Dorsolateral prefrontal cortex (tissue), 120 donors: ENCODE measurements at regions of chr19 and their contacts with region 1.

Region 1: GRCh38 chr19:7919610-7920518 is at the start of gene SNAPC2:
- DNase-seq: peak; percentile 86 to 95 (median 90)
- H3K4me3 ChIP-seq: peak within 1 kb of the TSS; percentile 59 to 90 (median 77)
- H3K27ac ChIP-seq: peak within 1 kb of the TSS; percentile 66 to 98 (median 92)
- H3K27me3 ChIP-seq: peaks cover 0 to 41% (median 21%) of the 10 kb centered on the region in 45 donors
- CTCF ChIP-seq: peak in 32 of 56 donors; percentile 11 to 45 (median 26)
- total RNA-seq, gene SNAPC2: 11.3 to 27.9 (median 16.9) TPM

Region 2: DNA sequence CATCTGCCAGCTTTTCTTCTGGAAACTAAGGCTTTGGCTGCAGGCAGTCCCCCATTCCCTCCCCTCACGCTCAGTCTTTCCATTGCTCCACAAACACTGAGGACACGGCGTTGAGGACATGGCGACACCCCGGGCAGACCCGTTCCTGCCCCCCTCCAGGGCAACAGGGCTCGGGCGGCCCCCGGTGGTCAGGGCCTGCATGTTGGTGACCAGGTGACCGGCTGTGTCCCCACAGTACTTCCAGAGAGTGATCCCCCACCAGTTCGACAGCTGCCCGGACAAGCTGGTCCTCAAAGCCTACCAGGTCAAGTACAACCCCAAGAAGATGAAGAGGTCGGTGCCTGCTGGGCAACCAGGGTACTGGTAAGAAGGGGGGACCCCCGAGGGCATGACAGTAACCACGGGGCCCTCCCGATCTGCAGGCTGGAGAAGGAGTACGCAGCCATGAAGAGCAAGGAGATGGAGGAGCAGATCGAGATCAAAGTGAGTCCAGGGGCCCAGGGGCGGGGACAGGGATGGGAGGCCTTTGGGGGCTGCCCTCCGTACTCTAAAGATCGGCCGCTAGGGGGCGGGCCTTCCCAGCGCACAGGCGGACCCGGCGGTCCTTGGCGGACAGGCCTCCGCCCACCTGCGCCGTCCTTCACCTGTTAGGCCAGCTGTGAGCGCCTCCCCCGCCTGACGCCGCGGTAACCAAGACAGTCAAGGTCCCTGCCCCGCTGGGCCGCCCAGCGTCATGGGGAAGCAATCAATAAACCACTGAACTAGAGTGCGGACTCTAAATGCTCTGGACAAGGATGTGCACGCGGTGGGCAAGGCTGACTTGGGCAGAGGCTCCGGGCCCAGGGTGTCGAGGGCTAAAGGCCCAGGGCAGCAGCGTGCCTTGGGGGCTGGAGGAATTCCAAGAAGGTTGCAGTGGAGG is 66.8 kb before region 1 on chr19:
- intact Hi-C with region 1: loop called in 1 of 2 experiments (anchors 5 kb)
- DNase-seq: peak in 8 of 10 donors; percentile 61 to 83 (median 76)
- H3K4me3 ChIP-seq: peak overlapping the region in 34 of 59 donors; percentile 1 to 55 (median 22)
- H3K27ac ChIP-seq: peak overlapping the region in 58 of 59 donors; percentile 35 to 100 (median 97)
- H3K27me3 ChIP-seq: no peaks in the 10 kb centered on the region
- CTCF ChIP-seq: peak; percentile 49 to 94 (median 82)

Region 3: GRCh38 chr19:7861955-7862951 is 57.6 kb before region 1 on chr19:
- intact Hi-C with region 1: loop called (anchors 5 kb)
- DNase-seq: peak in 1 of 10 donors; percentile 84
- H3K4me3 ChIP-seq: peak overlapping the region in 16 of 59 donors; percentile 6 to 44 (median 24)
- H3K27ac ChIP-seq: peak overlapping the region in 55 of 59 donors; percentile 3 to 89 (median 64)
- H3K27me3 ChIP-seq: peaks cover 0 to 3% (median 0%) of the 10 kb centered on the region in 45 donors
- CTCF ChIP-seq: peak in 5 of 56 donors; percentile 7 to 23 (median 11)

Region 4: GRCh38 chr19:7868676-7869452 is 51.0 kb before region 1 on chr19:
- intact Hi-C with region 1: loop called (anchors 5 kb)
- DNase-seq: peak in 3 of 10 donors; percentile 51 to 79 (median 66)
- H3K4me3 ChIP-seq: peak overlapping the region; percentile 18 to 66 (median 49)
- H3K27ac ChIP-seq: peak overlapping the region in 43 of 59 donors; percentile 9 to 79 (median 46)
- H3K27me3 ChIP-seq: peaks cover 0 to 5% (median 0%) of the 10 kb centered on the region in 45 donors
- CTCF ChIP-seq: peak; percentile 28 to 90 (median 72)

Region 5: DNA sequence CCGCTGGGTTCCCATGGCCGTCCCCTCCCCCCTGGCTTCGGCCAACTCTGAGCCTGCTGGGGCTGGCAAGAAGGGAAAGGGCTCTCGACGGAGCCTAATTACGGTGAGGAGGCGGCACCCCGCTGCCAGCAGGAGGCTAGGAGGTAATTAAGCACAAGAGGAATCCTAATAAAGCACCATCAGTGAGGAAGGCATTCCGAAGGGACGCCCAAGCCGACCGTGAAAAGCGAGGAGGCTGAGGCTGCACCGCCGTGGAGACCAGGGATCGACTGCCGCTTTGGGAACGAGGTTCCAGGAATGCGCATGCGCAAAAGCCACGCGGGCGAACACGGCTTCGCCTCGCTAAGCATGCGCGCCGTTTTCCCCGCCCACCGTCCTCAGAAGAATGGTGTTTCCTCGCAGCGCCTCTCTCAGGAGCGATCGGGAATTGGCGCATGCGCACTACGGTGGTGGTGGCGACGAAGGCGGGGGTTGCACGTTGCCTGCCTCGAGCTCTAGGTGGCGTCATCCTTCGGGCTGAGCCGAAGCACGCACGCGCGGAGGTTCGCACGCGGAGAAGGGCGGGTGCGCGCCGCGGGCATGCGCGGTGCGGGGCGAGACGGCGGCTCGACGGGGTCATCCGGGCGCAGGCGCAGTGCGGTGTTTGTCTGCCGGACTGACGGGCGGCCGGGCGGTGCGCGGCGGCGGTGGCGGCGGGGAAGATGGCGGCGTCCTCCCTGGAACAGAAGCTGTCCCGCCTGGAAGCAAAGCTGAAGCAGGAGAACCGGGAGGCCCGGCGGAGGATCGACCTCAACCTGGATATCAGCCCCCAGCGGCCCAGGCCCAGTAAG is 16.4 kb before region 1 on chr19 and contains the start of gene MAP2K7:
- intact Hi-C with region 1: loop called (anchors 1 kb)
- DNase-seq: peak; percentile 98 to 100 (median 99)
- H3K4me3 ChIP-seq: peak within 1 kb of the TSS; percentile 61 to 99 (median 88)
- H3K27ac ChIP-seq: peak within 1 kb of the TSS in 58 of 59 donors; percentile 54 to 97 (median 90)
- H3K27me3 ChIP-seq: no peaks in the 10 kb centered on the region
- CTCF ChIP-seq: peak; percentile 78 to 99 (median 94)
- total RNA-seq, gene MAP2K7: 28.0 to 51.9 (median 39.4) TPM

Region 6: DNA sequence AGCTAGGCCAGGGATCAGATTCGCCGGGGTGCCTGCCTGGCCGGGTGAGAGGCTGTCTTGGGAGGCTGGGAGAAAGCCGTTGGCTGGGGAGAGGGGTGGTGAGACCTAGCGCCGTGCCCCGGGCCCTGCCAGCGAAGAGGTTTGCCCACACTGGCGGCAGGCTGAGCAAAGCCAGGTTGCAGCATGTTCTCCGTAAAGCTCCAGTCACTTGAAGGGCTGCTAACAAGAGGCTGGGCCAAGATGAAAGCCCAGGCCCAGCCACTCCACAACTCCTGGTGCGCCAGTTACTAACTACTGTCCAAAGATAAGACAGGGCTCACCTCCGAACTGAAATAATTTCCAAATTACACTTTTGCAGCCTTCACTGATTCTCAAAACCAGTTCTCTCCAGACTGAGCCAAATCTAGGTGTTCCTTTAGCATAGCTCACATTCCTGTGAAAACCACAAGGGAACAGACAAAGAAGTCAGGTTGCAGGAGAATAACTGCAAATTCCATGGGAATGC is 69.3 kb after region 1 on chr19:
- intact Hi-C with region 1: no loop called
- DNase-seq: no peak
- H3K4me3 ChIP-seq: no peak overlapping the region
- H3K27ac ChIP-seq: no peak overlapping the region
- H3K27me3 ChIP-seq: no peaks in the 10 kb centered on the region
- CTCF ChIP-seq: no peak

Region 7: DNA sequence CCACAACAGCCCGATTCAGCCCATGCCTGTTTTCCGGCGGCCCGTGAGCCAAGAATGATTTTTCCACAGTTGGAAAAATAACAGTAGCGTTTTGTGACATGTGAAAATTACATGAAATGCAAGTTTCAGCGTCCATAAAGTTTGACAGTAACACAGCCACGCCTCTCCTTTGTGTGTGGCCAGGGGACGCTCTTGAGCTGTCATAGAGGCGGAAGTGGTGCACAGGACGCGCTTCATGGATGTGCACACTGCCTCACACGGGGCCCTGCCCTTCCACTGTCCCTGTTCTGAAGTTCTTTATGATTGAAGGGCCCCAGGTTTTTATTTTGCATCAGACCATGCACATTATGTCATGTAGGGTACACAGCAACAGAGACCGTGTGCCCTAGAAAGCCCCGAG is 97.9 kb after region 1 on chr19:
- intact Hi-C with region 1: no loop called
- DNase-seq: no peak
- H3K4me3 ChIP-seq: no peak overlapping the region
- H3K27ac ChIP-seq: no peak overlapping the region
- H3K27me3 ChIP-seq: no peaks in the 10 kb centered on the region
- CTCF ChIP-seq: peak in 1 of 56 donors; percentile 7